Activated CD8-positive, alpha-beta T cell treated with anti-CD3 and anti-CD28 coated beads for 36 hours (primary cell): ENCODE measurements at regions of chr5 and their contacts with region 1.

Region 1: DNA sequence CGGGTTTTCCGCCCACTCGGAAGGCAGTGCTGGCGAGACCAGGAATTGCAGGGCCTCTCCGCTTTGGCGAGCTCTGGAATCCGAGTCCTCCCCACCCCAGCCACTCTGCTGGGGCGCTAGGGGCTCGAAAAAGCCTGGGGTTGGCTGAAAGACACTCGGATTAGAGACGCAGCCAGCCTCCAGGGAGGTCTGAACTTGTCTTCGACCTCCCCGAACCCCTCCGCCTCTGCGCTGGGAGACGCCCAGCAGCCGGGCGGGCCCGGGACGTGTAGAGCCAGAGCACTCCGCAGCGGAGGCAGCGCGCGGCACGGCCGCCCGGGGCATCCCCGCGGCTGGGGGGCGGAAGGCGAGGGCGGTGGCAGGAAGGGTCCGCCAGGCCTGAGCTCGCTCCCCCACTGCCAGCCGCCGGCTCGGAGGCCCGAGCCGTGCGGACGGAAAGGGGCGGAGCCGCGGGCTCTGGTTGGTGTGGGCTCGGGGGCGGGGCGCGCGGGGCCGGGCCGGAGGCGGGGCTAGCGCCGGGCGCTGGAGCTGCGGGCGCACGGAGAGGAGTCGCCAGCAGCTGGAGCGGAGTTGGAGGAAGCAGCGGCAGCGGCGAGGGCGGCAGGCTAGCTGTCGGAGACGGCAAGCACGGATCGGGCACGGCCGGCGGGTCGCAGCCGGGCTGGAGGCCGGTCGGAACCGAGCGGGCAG is at the start of gene PIK3R1:
- DNase-seq: peak; percentile 94
- ATAC-seq: peak; percentile 84
- H3K4me3 Mint-ChIP-seq: peak within 1 kb of the TSS; percentile 97
- H3K27ac Mint-ChIP-seq: peak within 1 kb of the TSS; percentile 97
- H3K4me1 Mint-ChIP-seq: peaks cover 37% of the 10 kb centered on the region
- H3K27me3 Mint-ChIP-seq: no peaks in the 10 kb centered on the region
- CTCF ChIP-seq: peak; percentile 20
- total RNA-seq, gene PIK3R1: 55.4 to 57.6 TPM

Region 2: GRCh38 chr5:68159224-68159951 is 56.0 kb before region 1 on chr5:
- CTCF ChIA-PET with region 1: no interaction called
- POLR2A ChIA-PET with region 1: no interaction called
- intact Hi-C with region 1: no loop called
- DNase-seq: no peak
- ATAC-seq: no peak
- H3K4me3 Mint-ChIP-seq: no peak overlapping the region
- H3K27ac Mint-ChIP-seq: no peak overlapping the region
- H3K4me1 Mint-ChIP-seq: no peaks in the 10 kb centered on the region
- H3K27me3 Mint-ChIP-seq: no peaks in the 10 kb centered on the region
- CTCF ChIP-seq: no peak

Region 3: GRCh38 chr5:68239487-68239886 is 24.1 kb after region 1 on chr5:
- CTCF ChIA-PET with region 1: interaction called, 8 read pairs
- POLR2A ChIA-PET with region 1: interaction called, 16 read pairs
- intact Hi-C with region 1: no loop called
- DNase-seq: peak; percentile 96
- ATAC-seq: peak; percentile 96
- H3K4me3 Mint-ChIP-seq: peak overlapping the region; percentile 30
- H3K27ac Mint-ChIP-seq: peak overlapping the region; percentile 80
- H3K4me1 Mint-ChIP-seq: peaks cover 78% of the 10 kb centered on the region
- H3K27me3 Mint-ChIP-seq: no peaks in the 10 kb centered on the region
- CTCF ChIP-seq: no peak

Region 4: DNA sequence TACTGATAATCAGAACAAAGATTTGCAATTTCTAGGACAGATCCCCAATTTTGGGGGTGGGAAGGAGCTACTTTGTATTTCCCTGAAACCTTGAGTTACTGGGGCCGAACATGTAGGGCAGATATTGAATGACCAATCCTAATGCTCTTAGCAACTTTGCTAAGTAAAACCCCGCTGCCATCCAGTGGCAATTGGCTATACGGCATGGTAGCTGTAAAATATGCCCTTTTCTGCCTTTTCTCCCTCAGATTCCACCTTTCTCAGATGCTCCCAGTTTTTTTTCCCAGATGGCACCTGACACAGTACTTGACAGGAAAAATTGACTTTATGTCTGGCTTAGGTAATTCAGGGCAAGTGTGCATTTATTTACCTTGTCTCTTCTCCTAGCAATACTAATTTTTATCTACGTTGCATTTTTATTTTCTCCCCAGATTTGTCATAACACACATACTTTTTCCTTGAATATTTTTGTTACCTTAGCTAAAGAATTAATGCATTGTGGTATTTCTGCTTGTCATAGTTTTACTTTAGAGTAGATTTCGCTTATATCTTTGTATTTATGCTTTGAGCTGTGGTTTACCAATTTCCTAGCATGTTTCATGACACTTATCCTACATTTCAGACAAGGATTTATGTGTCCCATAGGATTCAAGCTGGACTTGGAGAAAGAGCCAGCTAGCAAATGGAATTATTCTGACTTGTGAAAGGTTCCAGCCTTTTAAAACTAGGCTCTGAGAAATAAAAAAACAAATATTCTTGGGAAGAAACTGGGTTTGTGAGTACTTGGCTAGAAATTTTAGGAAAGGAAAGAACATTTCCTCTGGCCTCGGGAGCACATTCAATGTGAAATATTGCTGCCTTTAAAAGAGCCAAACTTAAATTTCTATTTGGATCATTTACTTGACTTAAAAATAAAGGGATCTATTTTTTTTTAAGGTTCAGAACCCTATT is 37.6 kb after region 1 on chr5:
- CTCF ChIA-PET with region 1: interaction called, 46 read pairs
- POLR2A ChIA-PET with region 1: interaction called, 11 read pairs
- intact Hi-C with region 1: loop called (anchors 5 kb)
- DNase-seq: peak; percentile 67
- ATAC-seq: peak; percentile 34
- H3K4me3 Mint-ChIP-seq: no peak overlapping the region
- H3K27ac Mint-ChIP-seq: peak overlapping the region; percentile 17
- H3K4me1 Mint-ChIP-seq: peaks cover 90% of the 10 kb centered on the region
- H3K27me3 Mint-ChIP-seq: no peaks in the 10 kb centered on the region
- CTCF ChIP-seq: peak; percentile 67

Region 5: GRCh38 chr5:68260467-68260866 is 45.1 kb after region 1 on chr5:
- CTCF ChIA-PET with region 1: interaction called, 7 read pairs
- POLR2A ChIA-PET with region 1: interaction called, 11 read pairs
- intact Hi-C with region 1: loop called (anchors 5 kb)
- DNase-seq: no peak
- ATAC-seq: peak; percentile 64
- H3K4me3 Mint-ChIP-seq: no peak overlapping the region
- H3K27ac Mint-ChIP-seq: peak overlapping the region; percentile 21
- H3K4me1 Mint-ChIP-seq: peaks cover 82% of the 10 kb centered on the region
- H3K27me3 Mint-ChIP-seq: no peaks in the 10 kb centered on the region
- CTCF ChIP-seq: no peak

Region 6: GRCh38 chr5:68272289-68272688 is 56.9 kb after region 1 on chr5:
- CTCF ChIA-PET with region 1: interaction called, 11 read pairs
- POLR2A ChIA-PET with region 1: interaction called, 8 read pairs
- intact Hi-C with region 1: loop called (anchors 5 kb)
- DNase-seq: no peak
- ATAC-seq: no peak
- H3K4me3 Mint-ChIP-seq: no peak overlapping the region
- H3K27ac Mint-ChIP-seq: no peak overlapping the region
- H3K4me1 Mint-ChIP-seq: peaks cover 85% of the 10 kb centered on the region
- H3K27me3 Mint-ChIP-seq: no peaks in the 10 kb centered on the region
- CTCF ChIP-seq: peak; percentile 67

Region 7: GRCh38 chr5:68279984-68280383 is 64.6 kb after region 1 on chr5:
- CTCF ChIA-PET with region 1: interaction called, 3 read pairs
- POLR2A ChIA-PET with region 1: interaction called, 11 read pairs
- intact Hi-C with region 1: no loop called
- DNase-seq: peak; percentile 65
- ATAC-seq: peak; percentile 93
- H3K4me3 Mint-ChIP-seq: peak overlapping the region; percentile 68
- H3K27ac Mint-ChIP-seq: peak overlapping the region; percentile 98
- H3K4me1 Mint-ChIP-seq: peaks cover 92% of the 10 kb centered on the region
- H3K27me3 Mint-ChIP-seq: no peaks in the 10 kb centered on the region
- CTCF ChIP-seq: no peak

Region 8: GRCh38 chr5:68287976-68288706 is 72.8 kb after region 1 on chr5:
- CTCF ChIA-PET with region 1: interaction called, 10 read pairs
- POLR2A ChIA-PET with region 1: interaction called, 3 read pairs
- intact Hi-C with region 1: no loop called
- DNase-seq: peak; percentile 70
- ATAC-seq: peak; percentile 81
- H3K4me3 Mint-ChIP-seq: peak overlapping the region; percentile 83
- H3K27ac Mint-ChIP-seq: peak overlapping the region; percentile 92
- H3K4me1 Mint-ChIP-seq: peaks cover 84% of the 10 kb centered on the region
- H3K27me3 Mint-ChIP-seq: no peaks in the 10 kb centered on the region
- CTCF ChIP-seq: no peak